ENCODE measurements at regions of chr17 and their contacts with region 1.

Region 1: DNA sequence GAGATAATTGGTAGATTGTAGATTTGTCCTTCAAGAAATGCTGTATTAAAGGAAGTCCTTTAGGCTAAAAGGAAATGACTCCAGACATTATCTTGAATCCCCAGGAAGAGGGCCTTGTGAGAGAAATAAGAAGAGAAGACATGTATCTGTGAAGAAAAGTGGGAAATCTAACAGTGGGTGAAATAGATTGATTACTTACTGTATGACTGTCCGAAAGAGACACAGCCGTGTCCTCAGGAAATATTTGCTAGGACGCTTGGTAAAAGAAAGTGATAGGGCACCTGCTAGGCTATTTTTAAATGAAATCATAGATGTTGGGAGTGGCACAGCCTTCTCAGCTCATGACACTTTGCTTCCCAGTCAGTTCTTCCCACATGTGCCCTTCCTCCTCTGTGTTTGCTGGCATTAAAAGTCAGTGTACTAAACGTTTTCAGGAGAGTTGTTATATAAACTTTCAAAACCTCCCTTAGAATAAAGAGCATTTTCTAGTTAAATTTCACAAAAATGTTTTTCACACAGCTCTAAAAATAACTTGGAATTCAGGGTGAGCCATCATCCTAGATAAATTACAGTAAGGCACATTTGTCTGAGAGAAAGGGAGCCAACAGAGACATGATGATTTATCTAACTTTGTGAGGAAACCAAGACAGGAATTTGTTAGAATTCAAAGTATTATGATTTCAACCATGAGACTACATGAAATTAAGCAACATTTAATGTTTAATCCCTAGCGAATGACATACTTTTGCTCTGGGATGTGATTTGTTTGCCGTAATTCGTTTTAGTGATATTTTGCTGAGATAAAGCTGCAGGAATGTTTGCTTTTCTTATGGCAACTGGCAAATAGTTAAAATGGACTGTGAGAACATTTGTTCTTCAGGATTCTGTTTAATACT is 35.0 kb downstream of the DHRS7B start:
- DNase-seq: peak; percentile 82
- H3K4me3 ChIP-seq: peak overlapping the region; percentile 36
- H3K27ac ChIP-seq: peak overlapping the region; percentile 97
- H3K4me1 ChIP-seq: peaks cover 47% of the 10 kb centered on the region
- H3K27me3 ChIP-seq: no peaks in the 10 kb centered on the region

Region 2: DNA sequence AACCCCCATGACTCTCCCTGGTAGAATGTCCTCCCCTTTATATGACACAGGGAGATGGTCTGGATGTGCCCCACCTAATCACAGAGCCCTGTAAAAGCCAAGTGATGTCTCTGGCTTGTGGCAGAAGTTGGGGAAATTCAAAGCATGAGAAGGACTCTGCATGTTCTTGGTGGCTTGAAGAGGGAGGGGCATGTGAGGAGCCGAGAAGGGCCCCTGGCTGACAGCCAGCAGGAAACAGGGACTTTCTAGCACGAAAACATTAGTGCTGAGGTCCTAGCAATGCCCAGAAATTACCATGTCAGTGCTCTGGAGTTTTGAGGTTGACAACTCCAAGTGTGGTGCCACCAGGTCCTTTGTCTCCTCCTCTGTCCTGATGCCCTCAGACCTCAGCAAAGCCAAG is 194.9 kb before region 1 on chr17:
- in situ Hi-C with region 1: no loop called
- DNase-seq: no peak
- H3K4me3 ChIP-seq: no peak overlapping the region
- H3K27ac ChIP-seq: no peak overlapping the region
- H3K4me1 ChIP-seq: no peaks in the 10 kb centered on the region
- H3K27me3 ChIP-seq: peaks cover 19% of the 10 kb centered on the region

Region 3: DNA sequence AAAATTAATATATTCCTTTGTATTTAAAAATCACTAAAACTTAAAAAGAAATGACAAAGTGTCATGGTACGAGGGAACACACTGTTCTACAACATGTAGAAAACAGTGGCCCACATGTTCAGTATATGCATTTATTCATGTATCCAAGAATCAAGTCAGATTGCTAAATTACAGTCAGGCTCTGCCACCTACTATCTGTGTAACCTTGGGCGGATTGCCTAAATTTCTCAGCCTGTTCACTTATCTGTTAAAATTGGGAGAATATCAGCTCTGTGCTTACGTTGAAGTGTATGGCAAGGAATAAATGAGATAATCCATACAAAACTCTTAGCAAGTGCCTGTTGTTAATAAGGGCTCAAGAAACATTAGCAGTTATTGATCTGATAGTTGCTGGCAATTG is 115.5 kb before region 1 on chr17:
- in situ Hi-C with region 1: no loop called
- DNase-seq: no peak
- H3K4me3 ChIP-seq: no peak overlapping the region
- H3K27ac ChIP-seq: no peak overlapping the region
- H3K4me1 ChIP-seq: peaks cover 8% of the 10 kb centered on the region
- H3K27me3 ChIP-seq: no peaks in the 10 kb centered on the region

Region 4: GRCh38 chr17:21239680-21240368 is 78.1 kb after region 1 on chr17:
- in situ Hi-C with region 1: loop called (anchors 10 kb)
- DNase-seq: peak; percentile 67
- H3K4me3 ChIP-seq: no peak overlapping the region
- H3K27ac ChIP-seq: no peak overlapping the region
- H3K4me1 ChIP-seq: no peaks in the 10 kb centered on the region
- H3K27me3 ChIP-seq: no peaks in the 10 kb centered on the region